Psoas muscle (tissue), 8 donors: ENCODE measurements at regions of chr6 and their contacts with region 1.

Region 1: DNA sequence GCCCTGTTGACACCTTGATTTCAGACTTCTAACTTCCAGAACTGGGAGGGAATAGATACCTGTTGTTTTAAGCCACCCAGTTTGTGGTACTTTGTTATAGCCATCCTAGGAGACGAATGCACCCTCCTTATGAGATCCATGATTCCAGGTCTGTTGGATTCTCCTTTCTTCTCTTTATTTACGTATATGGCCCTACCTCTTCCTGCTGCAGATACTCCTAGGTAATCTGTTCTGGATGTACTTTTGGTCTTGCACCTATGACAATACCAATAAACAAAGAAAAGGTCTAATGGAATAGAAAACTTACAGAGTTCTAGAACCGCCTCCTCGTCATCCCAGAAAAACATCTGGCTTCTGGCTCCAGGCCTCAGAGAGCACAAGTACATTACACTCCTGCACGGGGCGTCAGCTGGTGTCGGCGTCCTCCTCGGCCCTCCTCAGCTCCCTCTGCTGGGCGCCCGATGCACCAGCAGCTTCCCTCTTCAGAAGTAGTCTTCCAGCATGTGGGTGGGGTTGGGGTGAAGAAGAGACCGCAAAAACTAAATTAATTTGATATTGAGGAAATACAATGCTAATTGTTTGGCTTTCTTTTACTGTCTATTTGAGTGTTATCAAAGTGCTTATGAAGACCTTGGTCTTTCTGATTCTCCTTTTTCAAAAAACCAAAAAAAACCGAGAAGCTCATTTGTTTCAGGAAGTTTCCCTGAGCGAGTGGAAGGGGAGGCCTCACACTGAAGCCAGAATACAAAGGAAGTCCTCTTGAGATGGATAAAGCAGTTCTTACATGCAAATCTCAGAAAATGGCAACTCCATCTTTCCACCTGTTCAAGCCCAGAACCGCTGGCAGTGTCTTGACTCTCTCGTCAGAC is 9.7 kb upstream of the ATXN1 start:
- DNase-seq: peak; percentile 72 to 90
- ATAC-seq: peak; percentile 79 to 88 (median 84)
- H3K4me3 ChIP-seq: no peak overlapping the region
- H3K27ac ChIP-seq: peak overlapping the region; percentile 12
- H3K4me1 ChIP-seq: peaks cover 34% of the 10 kb centered on the region
- H3K27me3 ChIP-seq: no peaks in the 10 kb centered on the region
- CTCF ChIP-seq: peak; percentile 86

Region 2: DNA sequence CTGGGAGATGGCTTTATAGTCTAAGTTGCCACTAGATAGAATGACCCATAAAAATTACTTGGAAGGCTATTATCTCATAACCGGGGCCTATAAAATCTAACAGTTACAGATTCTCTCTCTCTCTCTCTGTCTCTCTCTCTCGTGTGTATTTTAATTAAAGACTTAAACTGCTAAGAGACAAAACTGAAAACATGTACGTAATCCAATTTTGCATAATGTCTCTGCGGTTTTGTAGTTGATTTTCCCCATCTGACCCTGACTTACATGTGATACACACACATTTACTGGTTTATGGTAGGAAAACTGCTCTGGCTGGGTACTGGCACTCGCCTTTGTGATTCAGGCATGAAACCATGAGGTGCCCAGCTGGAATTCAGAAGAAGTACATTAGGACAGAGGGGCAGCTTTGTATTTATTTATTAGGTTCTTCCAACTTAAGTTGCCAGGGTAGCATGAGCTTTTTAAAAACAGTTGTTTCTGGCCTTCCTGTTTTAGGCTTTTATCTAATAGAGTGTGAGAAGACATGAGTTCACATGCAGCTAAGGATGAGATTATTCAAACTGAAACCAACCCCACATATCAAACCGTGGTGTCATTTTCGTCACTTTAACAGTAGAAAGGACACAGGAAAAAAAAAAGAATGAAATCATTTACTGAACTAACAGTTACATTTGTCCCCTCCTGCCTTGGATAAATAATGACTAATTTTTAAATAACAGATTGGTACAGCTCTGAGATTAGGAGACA is 350.0 kb before region 1 on chr6:
- intact Hi-C with region 1: loop called in 1 of 2 experiments (anchors 10 kb)
- DNase-seq: no peak
- ATAC-seq: no peak
- H3K4me3 ChIP-seq: no peak overlapping the region
- H3K27ac ChIP-seq: no peak overlapping the region
- H3K4me1 ChIP-seq: no peaks in the 10 kb centered on the region
- H3K27me3 ChIP-seq: no peaks in the 10 kb centered on the region
- CTCF ChIP-seq: no peak

Region 3: DNA sequence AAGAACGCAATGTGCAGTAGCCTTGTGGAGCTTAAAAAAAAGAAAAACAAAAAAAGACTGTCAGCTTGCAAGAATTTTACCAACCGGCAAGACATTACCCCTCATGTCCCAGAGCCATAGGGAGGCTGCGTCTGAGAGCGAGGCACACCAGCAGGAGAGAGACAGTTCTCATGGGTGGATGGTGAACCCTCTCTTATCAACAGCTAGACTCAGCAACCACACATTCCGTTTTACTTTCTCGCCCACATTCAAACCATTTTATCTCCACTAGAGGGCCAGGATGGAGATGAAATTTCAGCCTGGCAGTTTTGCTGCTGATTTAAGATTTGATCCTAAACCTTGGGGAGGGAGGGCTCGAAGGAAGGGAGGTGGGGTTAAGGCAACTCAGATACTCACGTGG is 256.7 kb before region 1 on chr6:
- intact Hi-C with region 1: loop called in 1 of 2 experiments (anchors 5 kb)
- DNase-seq: no peak
- ATAC-seq: peak in 3 of 4 donors; percentile 22 to 75 (median 53)
- H3K4me3 ChIP-seq: no peak overlapping the region
- H3K27ac ChIP-seq: no peak overlapping the region
- H3K4me1 ChIP-seq: peaks cover 30% of the 10 kb centered on the region
- H3K27me3 ChIP-seq: no peaks in the 10 kb centered on the region
- CTCF ChIP-seq: peak; percentile 53

Region 4: DNA sequence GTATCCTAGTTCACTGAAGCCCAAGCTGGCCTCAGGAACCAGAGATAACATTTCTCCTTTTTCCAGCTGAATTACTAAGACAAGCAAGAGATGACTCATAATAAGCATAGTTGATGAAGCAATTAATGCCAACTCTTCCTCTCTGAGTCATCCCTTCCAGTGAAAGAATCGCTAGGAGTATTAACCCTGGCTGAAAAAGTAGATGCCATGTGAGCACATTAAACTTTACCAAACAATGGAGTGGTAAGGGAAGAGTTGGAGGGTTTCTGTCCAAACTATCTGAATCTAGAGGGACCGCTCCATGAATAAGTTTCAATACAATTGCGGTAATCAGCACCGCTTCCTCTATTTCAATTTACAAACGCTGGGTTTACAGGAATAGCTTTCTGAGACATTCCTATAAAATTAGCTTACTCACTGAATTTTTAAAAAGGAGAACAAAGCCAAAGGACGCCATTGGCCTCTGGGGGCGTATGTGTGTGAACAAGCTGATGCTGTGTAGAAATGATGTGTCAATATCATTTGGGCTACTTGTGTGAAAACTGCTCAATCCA is 57.9 kb before region 1 on chr6:
- intact Hi-C with region 1: no loop called
- DNase-seq: peak in 1 of 2 donors; percentile 39
- ATAC-seq: peak; percentile 79 to 91 (median 82)
- H3K4me3 ChIP-seq: peak overlapping the region; percentile 4
- H3K27ac ChIP-seq: peak overlapping the region; percentile 74
- H3K4me1 ChIP-seq: peaks cover 29% of the 10 kb centered on the region
- H3K27me3 ChIP-seq: no peaks in the 10 kb centered on the region
- CTCF ChIP-seq: no peak

Region 5: DNA sequence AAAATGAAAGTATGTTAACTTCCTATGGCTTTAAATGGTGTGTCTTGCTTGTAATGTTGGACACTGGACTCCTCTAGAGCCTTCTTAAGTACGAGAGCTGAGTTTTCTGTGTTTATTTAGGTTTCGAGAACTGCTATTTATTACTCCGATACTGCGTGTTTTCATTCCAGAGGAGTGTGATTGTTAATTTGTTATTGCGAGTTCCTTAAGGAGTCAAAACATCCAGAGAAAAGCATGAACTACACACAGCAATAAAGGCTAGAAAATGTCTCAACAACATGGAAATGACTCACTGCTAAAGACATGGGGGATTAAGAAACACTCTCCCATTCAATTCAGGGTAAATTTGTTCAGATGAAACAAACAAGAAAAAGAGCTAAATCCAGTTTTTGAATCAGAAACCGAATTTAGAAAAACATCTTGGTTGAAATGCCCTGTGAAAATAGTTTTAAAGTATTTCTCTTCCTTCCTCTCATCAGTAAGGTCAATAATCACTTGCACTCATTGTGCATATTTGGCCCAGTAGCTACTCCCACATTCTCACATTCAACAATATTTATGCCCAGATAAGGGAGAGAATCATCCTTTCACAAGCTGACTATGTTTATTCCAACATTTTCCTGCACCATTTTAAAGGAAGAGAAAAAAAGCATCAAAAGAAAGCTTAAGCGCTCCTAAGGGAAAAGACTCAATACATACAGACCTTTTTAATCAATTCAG is 45.6 kb before region 1 on chr6:
- intact Hi-C with region 1: loop called in 1 of 2 experiments (anchors 5 kb)
- DNase-seq: no peak
- ATAC-seq: peak in 2 of 4 donors; percentile 52 to 56
- H3K4me3 ChIP-seq: no peak overlapping the region
- H3K27ac ChIP-seq: peak overlapping the region; percentile 61
- H3K4me1 ChIP-seq: peaks cover 50% of the 10 kb centered on the region
- H3K27me3 ChIP-seq: no peaks in the 10 kb centered on the region
- CTCF ChIP-seq: no peak

Region 6: DNA sequence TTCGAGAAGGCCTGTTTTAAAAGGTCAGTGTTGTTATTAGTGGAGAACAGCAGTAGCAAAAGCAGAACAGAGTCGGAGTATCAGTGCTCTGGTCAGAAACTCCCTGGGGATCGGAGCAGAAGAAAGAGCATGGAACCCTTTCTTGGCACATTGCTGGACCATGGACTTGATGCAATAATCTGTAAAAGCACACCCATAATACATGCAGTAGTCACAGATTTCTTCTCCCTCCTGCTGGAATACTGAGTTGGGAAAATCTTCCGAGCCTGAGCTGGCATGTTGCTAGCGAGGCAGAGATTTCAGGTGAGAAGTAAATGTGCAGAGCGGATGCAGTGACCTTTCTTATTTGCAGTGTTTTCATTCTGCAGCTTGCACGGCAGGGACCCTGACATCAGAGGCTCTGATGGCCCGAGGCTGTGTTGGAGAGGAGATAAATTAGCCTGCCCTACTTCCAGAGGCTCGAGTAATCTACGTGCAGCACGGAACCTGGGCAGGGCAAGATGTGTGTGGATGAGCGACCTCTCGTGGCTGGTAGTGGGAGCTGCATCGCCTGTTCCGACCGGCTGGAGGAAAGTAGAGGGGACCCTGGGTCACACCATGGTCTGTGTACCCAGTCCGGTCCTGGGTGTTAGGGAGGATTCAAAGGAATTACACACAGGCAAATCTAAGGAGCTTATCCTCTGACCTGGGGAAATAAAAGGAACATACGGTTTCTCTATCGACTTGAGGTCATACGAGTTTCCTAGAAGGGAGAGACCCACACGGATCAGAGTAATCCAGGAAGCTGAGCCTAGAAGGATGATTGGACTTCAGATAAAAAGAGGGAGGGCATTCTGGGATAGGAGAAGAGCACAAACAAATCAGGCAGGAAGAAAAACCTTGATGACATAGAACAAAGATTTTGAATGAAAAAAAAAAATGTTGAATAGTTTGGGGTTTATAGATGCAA is 193.9 kb after region 1 on chr6:
- intact Hi-C with region 1: loop called (anchors 5 kb)
- DNase-seq: peak; percentile 62 to 81
- ATAC-seq: peak; percentile 85 to 98 (median 96)
- H3K4me3 ChIP-seq: peak overlapping the region; percentile 11
- H3K27ac ChIP-seq: no peak overlapping the region
- H3K4me1 ChIP-seq: peaks cover 6% of the 10 kb centered on the region
- H3K27me3 ChIP-seq: peaks cover 0 to 3% (median 0%) of the 10 kb centered on the region in 3 donors
- CTCF ChIP-seq: peak; percentile 91

Region 7: GRCh38 chr6:18629571-18629970 is 1858.6 kb after region 1 on chr6:
- intact Hi-C with region 1: no loop called
- DNase-seq: no peak
- ATAC-seq: no peak
- H3K4me3 ChIP-seq: no peak overlapping the region
- H3K27ac ChIP-seq: no peak overlapping the region
- H3K4me1 ChIP-seq: no peaks in the 10 kb centered on the region
- H3K27me3 ChIP-seq: no peaks in the 10 kb centered on the region
- CTCF ChIP-seq: no peak